Dorsolateral prefrontal cortex (tissue), 120 donors: ENCODE measurements at regions of chr10 and their contacts with region 1.

Region 1: DNA sequence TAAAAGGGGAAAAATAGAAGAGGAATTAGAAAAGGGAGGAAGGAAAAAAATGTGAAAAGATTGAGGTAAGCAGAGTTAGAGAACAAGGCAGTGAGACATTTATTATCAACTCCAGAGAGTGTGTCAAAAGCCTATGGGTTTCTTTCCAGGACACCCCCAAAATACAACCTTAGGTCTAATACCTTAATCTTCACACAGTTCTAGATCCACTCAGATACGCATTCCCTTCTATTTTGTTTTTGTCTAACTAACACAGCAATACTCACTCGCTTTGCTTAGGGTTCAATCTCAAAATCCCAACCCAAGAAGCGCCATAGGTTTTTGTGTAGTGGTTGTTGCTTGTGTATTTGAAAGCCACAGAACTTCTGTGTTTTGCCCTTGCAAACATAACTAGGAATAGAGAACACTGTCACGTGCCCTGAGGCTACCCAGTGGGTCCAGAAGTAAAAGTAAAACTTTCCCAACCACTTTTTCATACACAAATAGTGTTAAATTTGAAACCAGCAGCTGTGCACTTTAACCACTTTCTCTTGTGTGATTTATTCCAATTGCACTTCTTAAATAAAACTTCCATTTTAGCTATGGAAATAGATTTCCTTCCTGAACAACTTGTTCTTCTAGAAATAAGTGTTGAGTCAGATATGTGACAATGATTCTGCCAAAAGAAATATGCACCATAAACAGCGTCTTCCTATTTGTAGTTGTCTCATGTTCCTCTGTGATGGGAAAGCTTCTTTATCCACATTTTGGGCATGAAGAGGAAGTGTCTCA is 414.7 kb upstream of the GHITM start:
- DNase-seq: peak in 1 of 10 donors; percentile 26
- H3K4me3 ChIP-seq: no peak overlapping the region
- H3K27ac ChIP-seq: peak overlapping the region in 57 of 59 donors; percentile 3 to 91 (median 76)
- H3K27me3 ChIP-seq: no peaks in the 10 kb centered on the region
- CTCF ChIP-seq: no peak

Region 2: DNA sequence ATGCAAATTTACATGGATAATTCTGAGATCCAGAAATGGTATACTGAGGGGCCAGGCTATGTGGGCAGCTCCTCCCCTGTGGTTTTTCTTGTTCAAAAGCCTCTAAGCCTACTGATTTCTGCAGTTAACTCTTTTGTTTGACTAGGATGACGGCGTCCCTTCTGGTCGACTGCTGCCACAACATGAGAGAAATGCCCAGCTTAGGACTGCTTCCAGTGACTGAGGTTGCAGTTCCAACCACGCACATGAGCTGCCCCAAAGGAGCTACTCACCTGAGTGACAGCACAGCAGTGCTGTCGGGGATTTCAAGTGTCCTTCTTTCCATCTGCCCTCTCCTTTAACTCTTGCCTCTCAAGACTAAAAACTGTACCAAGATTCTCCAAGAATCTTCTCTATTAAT is 558.3 kb before region 1 on chr10:
- intact Hi-C with region 1: no loop called
- DNase-seq: peak in 1 of 10 donors; percentile 13
- H3K4me3 ChIP-seq: no peak overlapping the region
- H3K27ac ChIP-seq: no peak overlapping the region
- H3K27me3 ChIP-seq: peaks cover 0 to 5% (median 0%) of the 10 kb centered on the region in 45 donors
- CTCF ChIP-seq: peak in 4 of 56 donors; percentile 14 to 28 (median 20)

Region 3: DNA sequence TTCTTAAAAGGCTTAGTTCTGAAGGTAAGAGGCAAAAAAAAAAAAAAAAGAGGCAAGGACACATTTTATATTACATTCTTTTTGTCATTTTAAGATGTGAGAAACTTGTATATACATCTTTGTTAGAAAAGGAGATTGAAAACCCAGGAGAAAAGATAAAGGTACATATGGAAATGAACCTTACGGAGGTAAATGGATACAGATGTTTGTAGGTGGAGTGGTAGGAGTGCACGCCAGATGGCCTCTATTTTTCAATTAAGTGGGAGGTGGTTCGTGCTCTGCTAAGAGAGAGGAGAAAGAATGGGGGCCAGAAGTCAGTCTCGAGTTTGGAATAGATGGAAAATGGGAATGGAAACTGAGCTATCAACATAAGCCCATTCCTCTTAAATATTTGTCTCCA is 207.9 kb before region 1 on chr10:
- intact Hi-C with region 1: loop called in 1 of 2 experiments (anchors 10 kb)
- DNase-seq: no peak
- H3K4me3 ChIP-seq: no peak overlapping the region
- H3K27ac ChIP-seq: peak overlapping the region in 43 of 59 donors; percentile 3 to 80 (median 53)
- H3K27me3 ChIP-seq: no peaks in the 10 kb centered on the region
- CTCF ChIP-seq: no peak

Region 4: DNA sequence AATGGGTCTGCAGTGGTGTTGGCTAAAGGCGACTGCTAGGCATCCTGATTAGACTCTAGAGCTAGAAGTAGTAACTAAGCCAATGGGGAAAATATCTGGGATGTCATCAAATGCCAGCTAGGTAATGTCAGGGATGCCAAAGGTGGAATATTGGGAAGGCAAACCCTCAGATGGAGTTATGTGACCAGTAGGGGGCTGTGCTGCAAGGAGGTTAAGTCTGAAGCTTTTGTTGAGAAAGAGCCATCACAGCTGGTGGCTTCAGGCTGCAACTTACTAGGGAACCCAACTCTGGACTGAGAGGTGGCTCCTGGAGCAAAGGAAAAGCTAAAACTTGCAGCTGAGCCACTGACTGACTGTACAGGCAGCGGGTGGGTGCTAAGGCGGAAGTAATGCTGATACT is 162.3 kb before region 1 on chr10:
- intact Hi-C with region 1: no loop called
- DNase-seq: no peak
- H3K4me3 ChIP-seq: no peak overlapping the region
- H3K27ac ChIP-seq: no peak overlapping the region
- H3K27me3 ChIP-seq: no peaks in the 10 kb centered on the region
- CTCF ChIP-seq: no peak

Region 5: GRCh38 chr10:83625831-83626360 is 98.8 kb before region 1 on chr10:
- intact Hi-C with region 1: no loop called
- DNase-seq: no peak
- H3K4me3 ChIP-seq: no peak overlapping the region
- H3K27ac ChIP-seq: no peak overlapping the region
- H3K27me3 ChIP-seq: peaks cover 0 to 2% (median 0%) of the 10 kb centered on the region in 45 donors
- CTCF ChIP-seq: no peak